Activated T-helper 1 cell treated with anti-CD3 and anti-CD28 coated beads, Interleukin-12 subunit alpha, Interleukin-12 subunit beta, Interleukin-2, Interleukin-4 antibody, amounts not matched to agents 30 ng/mL and 10 ng/mL and 1 ng/mL, durations not matched to agents 14 hours and 24 hours and 36 hours (primary cell): ENCODE measurements at regions of chrX and their contacts with region 1.

Region 1: GRCh38 chrX:1336331-1336943 is at the start of gene IL3RA:
- DNase-seq: peak; percentile 29
- H3K4me3 Mint-ChIP-seq: peak within 1 kb of the TSS; percentile 85
- H3K27ac Mint-ChIP-seq: peak within 1 kb of the TSS; percentile 53
- H3K4me1 Mint-ChIP-seq: peaks cover 27% of the 10 kb centered on the region
- H3K27me3 Mint-ChIP-seq: no peaks in the 10 kb centered on the region
- total RNA-seq, gene IL3RA: 4.2 and 5.3 TPM in 2 replicates

Region 2: DNA sequence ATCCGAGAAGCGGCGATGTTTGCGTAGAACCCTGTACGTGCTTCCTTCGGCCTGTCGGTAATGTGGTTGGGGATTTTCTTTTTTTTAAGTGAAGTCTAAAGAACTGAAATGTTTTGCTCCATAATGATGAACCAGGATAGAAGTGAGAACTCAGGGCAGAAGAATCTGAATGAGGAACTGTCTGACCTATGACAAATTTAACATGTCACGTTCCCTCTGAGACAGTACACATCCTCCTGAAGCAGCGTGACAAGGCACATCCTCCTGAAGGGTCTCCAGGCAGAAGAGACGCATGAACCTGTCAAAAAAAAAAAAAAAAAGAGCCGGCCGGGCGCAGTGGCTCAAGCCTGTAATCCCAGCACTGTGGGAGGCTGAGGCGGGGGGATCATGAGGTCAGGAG is 61.7 kb before region 1 on chrX:
- intact Hi-C with region 1: no loop called
- DNase-seq: no peak
- H3K4me3 Mint-ChIP-seq: no peak overlapping the region
- H3K27ac Mint-ChIP-seq: no peak overlapping the region
- H3K4me1 Mint-ChIP-seq: no peaks in the 10 kb centered on the region
- H3K27me3 Mint-ChIP-seq: no peaks in the 10 kb centered on the region

Region 3: DNA sequence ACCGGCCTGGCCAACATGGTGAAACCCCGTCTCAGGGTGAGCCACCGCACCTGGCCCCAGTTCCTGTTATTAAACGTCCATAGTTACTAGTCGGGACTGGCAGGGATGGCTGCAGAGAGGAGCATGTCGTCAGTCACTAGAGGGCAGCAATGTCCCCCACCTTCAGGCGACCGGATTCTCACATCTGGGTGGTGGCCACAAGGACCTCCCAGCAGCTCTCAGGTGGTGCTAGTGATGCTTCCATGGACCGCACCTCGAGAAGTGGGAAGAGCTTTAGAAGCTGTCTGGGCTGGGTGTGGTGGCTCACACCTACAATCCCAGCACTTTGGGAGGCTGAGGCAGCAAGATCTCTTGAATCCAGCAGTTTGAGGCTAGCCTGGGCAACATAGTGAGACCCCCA is 13.1 kb before region 1 on chrX:
- intact Hi-C with region 1: loop called (anchors 1 kb)
- DNase-seq: peak; percentile 45
- H3K4me3 Mint-ChIP-seq: no peak overlapping the region
- H3K27ac Mint-ChIP-seq: peak overlapping the region; percentile 55
- H3K4me1 Mint-ChIP-seq: peaks cover 12% of the 10 kb centered on the region
- H3K27me3 Mint-ChIP-seq: peaks cover 5% of the 10 kb centered on the region

Region 4: GRCh38 chrX:1420371-1420770 is 83.9 kb after region 1 on chrX:
- intact Hi-C with region 1: no loop called
- DNase-seq: no peak
- H3K4me3 Mint-ChIP-seq: no peak overlapping the region
- H3K27ac Mint-ChIP-seq: no peak overlapping the region
- H3K4me1 Mint-ChIP-seq: no peaks in the 10 kb centered on the region
- H3K27me3 Mint-ChIP-seq: no peaks in the 10 kb centered on the region